Activated CD8-positive, alpha-beta T cell treated with anti-CD3 and anti-CD28 coated beads for 36 hours (primary cell): ENCODE measurements at regions of chr4 and their contacts with region 1.

Region 1: DNA sequence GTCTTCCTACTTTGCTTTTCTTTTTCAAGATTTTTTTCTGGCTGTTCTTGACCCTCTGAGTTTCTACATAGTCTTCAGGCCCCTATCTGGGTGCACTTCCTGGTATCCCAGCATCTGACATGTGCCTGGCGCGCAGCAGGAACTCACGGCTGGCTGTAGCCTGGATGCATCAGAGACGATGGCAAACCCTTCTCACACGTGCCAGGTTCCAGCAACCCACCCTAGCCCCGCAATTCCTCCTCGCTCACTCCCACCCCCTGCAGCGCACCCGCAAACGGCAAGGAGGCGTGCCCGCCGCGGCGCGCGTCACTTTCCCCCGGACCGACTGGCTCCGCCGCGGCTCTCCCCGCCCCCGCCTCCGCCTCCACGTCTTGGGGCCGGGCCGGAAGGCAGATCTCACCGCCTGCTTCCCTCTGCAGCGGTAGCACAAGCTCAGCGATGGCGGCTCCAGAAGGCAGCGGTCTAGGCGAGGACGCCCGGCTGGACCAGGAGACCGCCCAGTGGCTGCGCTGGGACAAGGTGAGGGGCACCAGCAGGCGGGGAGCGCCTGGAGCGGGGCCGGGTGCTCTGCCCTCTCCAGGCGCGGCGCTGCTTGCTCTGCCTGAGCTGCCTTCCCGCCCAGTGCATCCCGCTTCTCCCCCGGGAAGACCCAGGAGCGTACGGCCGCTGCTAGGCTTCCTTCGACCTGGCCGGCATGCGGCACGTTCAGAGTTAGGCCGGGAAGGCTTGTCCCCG is at the start of gene PGM2:
- DNase-seq: peak; percentile 94
- ATAC-seq: peak; percentile 98
- H3K4me3 Mint-ChIP-seq: peak within 1 kb of the TSS; percentile 97
- H3K27ac Mint-ChIP-seq: peak within 1 kb of the TSS; percentile 90
- H3K4me1 Mint-ChIP-seq: peaks cover 28% of the 10 kb centered on the region
- H3K27me3 Mint-ChIP-seq: no peaks in the 10 kb centered on the region
- CTCF ChIP-seq: no peak
- total RNA-seq, gene PGM2: 63.0 to 67.6 TPM

Region 2: DNA sequence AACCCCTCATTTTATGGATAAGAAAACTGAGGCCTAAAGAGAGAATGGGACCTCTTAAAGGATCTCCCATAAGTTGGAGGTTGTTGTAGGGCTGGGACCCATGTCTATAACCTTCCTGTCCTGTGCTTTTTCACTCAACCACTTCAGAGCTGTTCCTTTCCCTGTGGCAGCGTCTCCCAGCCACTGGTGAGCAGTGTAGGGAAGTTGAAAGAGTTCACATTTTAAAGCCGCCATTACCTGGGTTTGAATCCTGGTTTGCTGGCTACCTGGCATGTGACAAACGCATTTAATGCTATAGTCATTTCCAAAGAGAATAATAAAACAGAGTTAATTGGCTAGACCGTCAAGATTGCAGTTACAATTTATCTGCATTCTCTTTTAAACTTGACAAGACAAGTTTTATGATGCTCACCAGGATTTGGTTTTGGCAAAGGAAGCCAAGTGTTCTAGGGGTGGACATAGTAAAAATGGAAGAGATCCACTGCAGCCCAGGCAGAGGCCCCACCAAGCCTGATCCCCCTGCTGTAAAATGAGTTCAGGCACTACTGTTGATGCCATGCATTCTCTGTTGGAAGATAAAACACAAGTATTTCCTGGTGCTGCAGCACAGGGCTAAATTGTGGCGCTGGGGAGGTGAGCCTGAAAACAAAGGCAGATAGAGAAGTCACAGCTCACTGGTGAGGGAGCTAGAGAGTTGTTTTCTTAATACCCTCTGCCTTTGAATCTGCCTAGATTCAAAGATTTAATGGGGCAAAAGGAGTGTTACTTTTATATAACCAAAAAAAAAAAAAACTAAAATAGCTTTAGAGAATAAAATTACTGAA is 363.2 kb before region 1 on chr4:
- CTCF ChIA-PET with region 1: no interaction called
- POLR2A ChIA-PET with region 1: no interaction called
- intact Hi-C with region 1: no loop called
- DNase-seq: no peak
- ATAC-seq: no peak
- H3K4me3 Mint-ChIP-seq: no peak overlapping the region
- H3K27ac Mint-ChIP-seq: no peak overlapping the region
- H3K4me1 Mint-ChIP-seq: no peaks in the 10 kb centered on the region
- H3K27me3 Mint-ChIP-seq: peaks cover 21% of the 10 kb centered on the region
- CTCF ChIP-seq: no peak

Region 3: DNA sequence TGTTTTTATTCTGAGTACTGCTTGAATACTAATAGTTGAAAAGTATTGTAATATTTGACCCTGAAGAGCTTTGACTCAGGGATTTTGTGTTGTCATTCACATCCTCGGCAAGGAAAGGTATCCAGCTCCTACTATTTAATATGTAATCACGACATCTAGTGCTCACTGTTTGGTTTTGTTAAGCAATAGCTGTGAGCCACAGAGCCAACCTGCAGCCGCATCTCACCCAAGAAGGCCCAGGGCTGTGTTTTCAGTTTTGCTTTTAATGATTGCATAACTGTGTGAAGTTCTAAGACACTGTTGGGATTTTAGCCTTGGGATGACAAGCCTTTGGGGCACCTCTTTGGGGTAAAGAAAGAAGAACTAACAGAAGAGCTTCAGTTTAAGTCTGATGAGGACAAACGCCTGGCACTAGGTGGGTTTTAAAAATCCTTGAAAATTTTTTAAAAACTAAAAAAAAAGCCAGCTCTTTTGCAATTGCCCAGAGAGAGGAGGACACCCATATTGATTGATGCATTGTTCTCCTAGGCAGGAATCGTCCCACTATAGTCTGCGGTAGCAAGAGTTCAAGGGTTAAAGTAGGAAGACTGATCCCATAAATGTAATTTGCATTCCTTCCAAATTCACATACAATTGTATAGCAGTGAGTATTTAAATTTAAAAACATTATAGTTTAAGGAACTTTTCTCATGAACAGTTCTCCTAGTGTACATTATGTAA is 298.1 kb before region 1 on chr4:
- CTCF ChIA-PET with region 1: no interaction called
- POLR2A ChIA-PET with region 1: no interaction called
- intact Hi-C with region 1: no loop called
- DNase-seq: no peak
- ATAC-seq: no peak
- H3K4me3 Mint-ChIP-seq: no peak overlapping the region
- H3K27ac Mint-ChIP-seq: no peak overlapping the region
- H3K4me1 Mint-ChIP-seq: no peaks in the 10 kb centered on the region
- H3K27me3 Mint-ChIP-seq: no peaks in the 10 kb centered on the region
- CTCF ChIP-seq: no peak

Region 4: GRCh38 chr4:37977471-37978247 is 151.2 kb after region 1 on chr4:
- CTCF ChIA-PET with region 1: interaction called, 3 read pairs
- POLR2A ChIA-PET with region 1: interaction called, 5 read pairs
- intact Hi-C with region 1: loop called (anchors 10 kb)
- DNase-seq: peak; percentile 78
- ATAC-seq: peak; percentile 71
- H3K4me3 Mint-ChIP-seq: peak overlapping the region; percentile 81
- H3K27ac Mint-ChIP-seq: peak overlapping the region; percentile 80
- H3K4me1 Mint-ChIP-seq: peaks cover 37% of the 10 kb centered on the region
- H3K27me3 Mint-ChIP-seq: no peaks in the 10 kb centered on the region
- CTCF ChIP-seq: peak; percentile 65